Activated T-helper 1 cell treated with anti-CD3 and anti-CD28 coated beads, Interleukin-12 subunit alpha, Interleukin-12 subunit beta, Interleukin-2, Interleukin-4 antibody, amounts not matched to agents 30 ng/mL and 10 ng/mL and 1 ng/mL, durations not matched to agents 14 hours and 24 hours and 36 hours (primary cell): ENCODE measurements at regions of chr9 and their contacts with region 1.

Region 1: DNA sequence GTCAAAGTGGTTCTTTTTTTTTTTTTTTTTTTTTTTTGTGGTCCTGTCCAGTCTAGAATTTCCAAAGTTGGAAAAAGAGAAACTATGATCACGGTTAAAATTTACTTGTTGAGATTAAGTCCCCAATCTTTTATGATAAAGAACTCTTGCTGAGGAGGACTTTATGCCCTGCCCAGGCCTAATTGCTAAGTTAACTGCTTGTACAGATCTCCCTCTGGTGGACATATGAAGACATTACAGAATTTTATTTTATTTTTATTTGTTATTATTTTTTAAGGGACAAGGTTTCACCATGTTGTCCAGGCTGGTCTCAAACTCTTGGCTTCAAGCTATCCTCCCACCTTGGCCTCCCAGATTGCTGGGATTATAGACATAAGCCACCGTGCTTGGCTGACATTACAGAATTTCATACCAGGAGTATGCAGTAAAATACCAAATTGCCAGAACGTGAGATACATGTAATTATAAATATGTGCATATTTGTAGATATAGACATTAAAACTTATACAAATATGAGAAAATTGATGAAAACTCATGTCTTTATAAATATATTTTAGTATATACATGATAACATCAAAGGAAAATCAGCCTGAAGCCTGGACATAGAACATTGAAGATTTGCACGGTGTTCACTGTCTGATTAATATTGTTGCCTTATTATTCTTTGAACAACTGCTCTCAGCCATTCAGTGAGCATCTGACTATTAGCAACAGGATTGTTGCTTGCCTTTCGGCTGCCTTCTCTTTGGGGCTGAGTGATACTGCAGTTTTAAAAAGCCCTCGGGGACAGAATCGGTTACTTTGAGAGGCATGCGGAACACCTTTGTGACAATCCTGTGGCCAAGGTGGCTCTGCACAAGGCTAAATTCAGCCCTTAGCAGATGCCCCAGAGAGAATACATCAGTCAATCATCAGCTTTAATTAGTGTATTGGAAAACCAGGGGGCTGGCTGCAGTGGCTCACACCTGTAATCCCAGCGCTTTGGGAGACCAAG is 91.0 kb downstream of the RFK start:
- DNase-seq: no peak
- H3K4me3 Mint-ChIP-seq: no peak overlapping the region
- H3K27ac Mint-ChIP-seq: no peak overlapping the region
- H3K4me1 Mint-ChIP-seq: no peaks in the 10 kb centered on the region
- H3K27me3 Mint-ChIP-seq: peaks cover 2% of the 10 kb centered on the region

Region 2: DNA sequence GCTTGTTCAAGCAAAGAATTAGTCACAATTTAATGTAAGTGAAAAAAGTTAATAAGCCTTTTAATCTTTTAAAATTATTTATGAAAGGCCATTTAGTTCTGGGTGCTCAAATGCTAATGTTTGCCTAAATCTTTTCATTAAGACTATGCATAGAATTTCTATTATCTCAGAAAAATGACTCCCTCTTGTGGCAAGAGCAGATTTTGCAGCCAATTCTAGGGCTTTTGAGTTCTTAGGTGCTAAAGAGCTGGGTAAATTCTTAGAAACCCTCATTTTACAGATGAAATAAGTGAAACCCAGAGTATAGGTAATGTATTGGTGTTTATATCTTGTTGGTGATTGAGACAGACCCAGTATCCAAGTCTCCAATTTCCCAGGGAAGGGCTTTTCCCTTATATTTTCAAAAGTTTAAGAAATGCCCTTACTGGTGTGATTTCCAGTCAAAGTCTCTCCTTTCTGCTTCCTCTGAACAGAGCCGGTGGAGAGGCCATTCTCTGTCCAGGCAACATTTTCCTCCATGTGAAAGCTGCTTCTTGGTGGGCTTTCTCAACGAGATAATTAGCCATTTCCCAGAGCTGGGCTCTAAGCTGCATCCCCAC is 436.9 kb before region 1 on chr9:
- intact Hi-C with region 1: loop called (anchors 2 kb)
- DNase-seq: no peak
- H3K4me3 Mint-ChIP-seq: no peak overlapping the region
- H3K27ac Mint-ChIP-seq: no peak overlapping the region
- H3K4me1 Mint-ChIP-seq: no peaks in the 10 kb centered on the region
- H3K27me3 Mint-ChIP-seq: peaks cover 3% of the 10 kb centered on the region

Region 3: DNA sequence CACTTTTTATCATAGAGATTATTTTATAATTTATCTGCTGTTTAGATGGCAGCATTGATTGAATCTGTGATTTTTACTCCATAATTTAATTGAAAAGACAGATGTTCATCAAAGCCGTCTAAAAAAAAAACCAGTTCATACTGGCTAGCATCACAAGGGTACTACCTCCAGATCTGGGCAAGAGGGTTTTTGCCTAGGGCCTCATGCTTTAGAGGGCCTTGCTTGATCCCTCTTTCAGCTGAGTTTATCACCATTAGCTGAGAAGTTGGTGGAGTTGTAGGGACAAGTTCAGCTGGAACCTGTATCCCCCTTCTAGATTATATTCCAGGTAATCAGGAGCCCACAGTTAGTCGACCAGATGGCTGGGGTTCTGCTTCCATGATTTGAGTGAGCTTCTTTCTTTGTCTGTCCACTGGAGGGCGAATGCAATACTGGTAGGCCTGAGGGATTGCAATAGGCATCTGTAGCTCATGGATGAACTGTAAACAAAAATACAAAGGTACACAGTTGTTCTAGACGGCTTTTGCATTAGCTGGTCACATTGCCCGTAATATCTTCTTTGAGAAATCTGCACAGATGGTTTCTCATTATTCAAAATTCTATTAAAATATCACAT is 324.0 kb before region 1 on chr9:
- intact Hi-C with region 1: loop called (anchors 2 kb)
- DNase-seq: no peak
- H3K4me3 Mint-ChIP-seq: no peak overlapping the region
- H3K27ac Mint-ChIP-seq: no peak overlapping the region
- H3K4me1 Mint-ChIP-seq: no peaks in the 10 kb centered on the region
- H3K27me3 Mint-ChIP-seq: no peaks in the 10 kb centered on the region

Region 4: GRCh38 chr9:76181020-76181641 is 122.1 kb before region 1 on chr9:
- intact Hi-C with region 1: loop called (anchors 5 kb)
- DNase-seq: peak; percentile 9
- H3K4me3 Mint-ChIP-seq: no peak overlapping the region
- H3K27ac Mint-ChIP-seq: peak overlapping the region; percentile 65
- H3K4me1 Mint-ChIP-seq: peaks cover 57% of the 10 kb centered on the region
- H3K27me3 Mint-ChIP-seq: no peaks in the 10 kb centered on the region

Region 5: DNA sequence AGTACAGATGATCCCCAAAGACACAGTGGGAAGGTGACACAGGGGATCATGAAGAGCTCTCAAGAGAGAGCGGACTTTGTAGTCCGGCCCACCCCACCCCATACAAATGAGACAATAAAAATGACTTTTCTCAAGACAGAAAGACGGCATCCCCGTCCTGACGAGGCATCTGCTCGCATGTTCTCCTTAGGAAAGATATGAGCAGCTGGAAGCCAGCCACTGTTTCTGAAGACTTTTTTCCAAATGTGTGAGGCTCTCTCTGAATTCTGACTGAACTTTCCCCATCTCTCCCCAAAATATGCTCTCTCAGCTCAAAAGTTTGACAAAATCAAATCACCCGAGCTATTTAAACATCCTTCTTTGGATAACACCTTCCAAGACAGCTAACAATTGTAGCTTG is 14.2 kb before region 1 on chr9:
- intact Hi-C with region 1: no loop called
- DNase-seq: no peak
- H3K4me3 Mint-ChIP-seq: no peak overlapping the region
- H3K27ac Mint-ChIP-seq: no peak overlapping the region
- H3K4me1 Mint-ChIP-seq: peaks cover 8% of the 10 kb centered on the region
- H3K27me3 Mint-ChIP-seq: no peaks in the 10 kb centered on the region

Region 6: DNA sequence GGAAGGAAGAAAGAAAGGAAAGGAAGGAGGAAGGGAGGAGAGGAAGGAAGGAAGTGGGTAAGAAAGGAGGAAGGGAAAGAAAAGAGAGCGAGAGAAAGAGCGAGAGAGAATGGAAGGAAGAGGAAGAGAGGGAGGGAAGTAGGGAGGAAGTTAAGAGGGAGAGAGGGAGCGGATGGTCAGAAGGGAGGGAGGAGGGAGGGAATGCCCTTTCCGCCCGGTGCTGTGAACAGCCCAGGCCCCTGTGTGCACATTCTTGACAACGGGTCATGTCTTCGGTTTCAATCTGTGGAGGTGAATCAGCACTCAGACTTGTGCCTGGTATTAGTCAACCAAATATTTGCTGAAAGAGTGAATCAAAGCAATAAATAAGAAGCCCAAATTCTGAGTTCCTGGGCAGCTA is 563.4 kb after region 1 on chr9:
- intact Hi-C with region 1: no loop called
- DNase-seq: no peak
- H3K4me3 Mint-ChIP-seq: no peak overlapping the region
- H3K27ac Mint-ChIP-seq: no peak overlapping the region
- H3K4me1 Mint-ChIP-seq: no peaks in the 10 kb centered on the region
- H3K27me3 Mint-ChIP-seq: peaks cover 10% of the 10 kb centered on the region